ENCODE measurements at regions of chr12 and their contacts with region 1.

Region 1: GRCh38 chr12:8038659-8039114 is 6.2 kb downstream of the FOXJ2 start:
- DNase-seq: peak in 2 of 3 donors; percentile 35 to 57
- H3K4me3 ChIP-seq: peak overlapping the region in 4 of 7 experiments; percentile 1 to 57 (median 48)
- H3K27ac ChIP-seq: no peak overlapping the region
- H3K4me1 ChIP-seq: peaks cover 27 to 58% (median 45%) of the 10 kb centered on the region in 4 experiments
- H3K27me3 ChIP-seq: no peaks in the 10 kb centered on the region

Region 2: DNA sequence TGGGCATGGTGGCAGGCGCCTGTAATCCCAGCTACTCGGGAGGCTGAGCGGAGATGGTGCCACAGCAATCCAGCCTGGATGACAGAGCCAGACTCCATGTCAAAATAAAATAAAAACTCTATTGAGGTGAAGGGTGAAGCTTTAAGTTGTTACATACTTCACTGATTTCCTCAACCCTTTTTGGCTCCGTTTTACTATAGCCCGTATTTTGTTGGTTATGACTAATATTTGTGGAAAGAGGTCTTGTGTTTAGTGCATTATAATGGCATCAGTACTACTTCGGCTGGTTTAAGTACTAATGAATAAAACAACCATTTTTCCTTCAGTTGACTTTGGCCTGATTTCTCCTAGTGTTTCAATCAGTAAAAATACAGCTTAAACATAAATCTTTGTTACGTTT is 138.9 kb before region 1 on chr12:
- CTCF ChIA-PET with region 1: no interaction called
- POLR2A ChIA-PET with region 1: no interaction called
- DNase-seq: no peak
- H3K4me3 ChIP-seq: no peak overlapping the region
- H3K27ac ChIP-seq: no peak overlapping the region
- H3K4me1 ChIP-seq: no peaks in the 10 kb centered on the region
- H3K27me3 ChIP-seq: no peaks in the 10 kb centered on the region

Region 3: DNA sequence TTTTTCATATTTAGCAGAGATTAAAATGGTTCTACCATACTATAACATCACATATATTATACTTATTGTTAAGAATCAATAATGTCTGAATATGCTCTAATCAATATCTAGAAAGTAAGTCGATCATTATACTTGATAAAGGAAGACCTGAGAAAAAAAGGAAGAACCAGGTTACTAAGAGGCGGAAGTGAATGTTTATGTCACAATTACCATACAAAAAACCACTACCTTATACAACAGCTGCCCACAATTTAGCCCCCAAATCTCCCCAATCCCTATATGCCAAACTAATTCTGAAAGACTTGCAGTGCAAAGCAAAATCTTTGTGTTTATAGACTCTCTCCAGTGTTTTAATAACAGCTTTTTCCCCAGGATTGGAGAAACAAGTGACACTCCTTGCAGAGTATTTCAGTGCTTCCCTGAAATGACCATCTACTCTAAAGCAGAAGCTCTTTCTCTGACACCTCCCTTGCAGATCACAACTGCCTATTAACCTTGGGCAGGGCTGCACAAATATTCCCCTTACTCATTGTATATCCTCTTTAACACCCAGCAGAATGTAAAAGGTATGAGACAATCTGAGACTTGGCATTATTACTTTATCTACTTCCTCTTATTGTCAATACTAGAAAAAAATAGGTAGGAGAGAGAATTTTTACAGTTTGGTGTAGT is 90.0 kb before region 1 on chr12:
- CTCF ChIA-PET with region 1: no interaction called
- POLR2A ChIA-PET with region 1: no interaction called
- DNase-seq: peak in 2 of 3 donors; percentile 69 to 81
- H3K4me3 ChIP-seq: no peak overlapping the region
- H3K27ac ChIP-seq: peak overlapping the region in 1 of 2 experiments; percentile 38
- H3K4me1 ChIP-seq: peaks cover 7 to 24% (median 12%) of the 10 kb centered on the region in 4 experiments
- H3K27me3 ChIP-seq: no peaks in the 10 kb centered on the region

Region 4: GRCh38 chr12:8026291-8026900 is 12.3 kb before region 1 on chr12:
- CTCF ChIA-PET with region 1: interaction called, 12 read pairs
- POLR2A ChIA-PET with region 1: no interaction called
- DNase-seq: peak; percentile 99
- H3K4me3 ChIP-seq: peak overlapping the region; percentile 50 to 93 (median 86)
- H3K27ac ChIP-seq: peak overlapping the region; percentile 94 to 95
- H3K4me1 ChIP-seq: peaks cover 3 to 16% (median 9%) of the 10 kb centered on the region in 4 experiments
- H3K27me3 ChIP-seq: no peaks in the 10 kb centered on the region

Measured in common myeloid progenitor, CD34-positive (primary cell).